ENCODE measurements at regions of chr6 and their contacts with region 1.

Region 1: GRCh38 chr6:138817822-138818308 is 22.0 kb downstream of the ECT2L start:
- DNase-seq: peak in 1 of 9 donors; percentile 28
- ATAC-seq: no peak
- H3K4me3 ChIP-seq: no peak overlapping the region
- H3K4me3 Mint-ChIP-seq: no peak overlapping the region
- H3K27ac ChIP-seq: no peak overlapping the region
- H3K27ac Mint-ChIP-seq: peak overlapping the region in 1 of 9 donors; percentile 21
- H3K4me1 ChIP-seq: no peaks in the 10 kb centered on the region
- H3K4me1 Mint-ChIP-seq: peaks cover 0 to 30% (median 0%) of the 10 kb centered on the region in 7 donors
- H3K27me3 ChIP-seq: no peaks in the 10 kb centered on the region
- H3K27me3 Mint-ChIP-seq: no peaks in the 10 kb centered on the region

Region 2: DNA sequence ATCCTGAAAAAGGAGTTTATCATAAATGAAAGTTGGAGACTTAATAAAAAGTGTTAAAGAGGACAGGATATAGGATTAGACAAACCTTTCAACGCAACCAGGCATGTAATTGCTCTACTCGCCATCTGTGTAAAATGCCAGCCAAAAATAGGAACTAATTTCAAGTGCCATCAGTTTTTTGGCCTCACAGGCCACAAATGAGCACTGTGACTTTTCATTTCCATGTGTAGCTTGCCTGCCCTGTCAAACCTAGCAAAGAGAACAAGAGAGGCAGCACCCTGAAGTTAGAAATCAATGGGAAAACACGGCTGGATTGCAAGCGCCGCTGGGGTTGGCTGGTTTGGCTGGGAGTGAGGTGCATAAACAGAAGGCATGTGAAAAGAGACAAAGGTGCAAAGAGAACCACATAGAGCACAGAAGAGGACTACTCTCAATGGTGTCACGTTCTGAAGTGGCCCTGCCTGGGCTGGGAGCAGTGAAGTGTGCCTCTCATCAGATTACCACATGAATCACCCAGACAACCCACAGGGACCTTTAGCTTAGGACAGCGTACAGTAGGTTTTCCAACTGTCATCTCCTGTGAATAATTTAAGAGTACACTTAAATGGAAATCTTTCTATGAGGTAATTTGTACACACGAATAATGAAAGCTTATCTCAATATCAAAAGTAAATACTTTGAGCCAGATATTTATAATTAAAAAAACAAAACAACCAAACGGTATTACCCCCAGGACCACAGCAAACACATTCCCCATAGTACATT is 240.5 kb before region 1 on chr6:
- CTCF ChIA-PET with region 1: no interaction called
- POLR2A ChIA-PET with region 1: no interaction called
- intact Hi-C with region 1: no loop called
- DNase-seq: no peak
- ATAC-seq: no peak
- H3K4me3 ChIP-seq: no peak overlapping the region
- H3K4me3 Mint-ChIP-seq: no peak overlapping the region
- H3K27ac ChIP-seq: no peak overlapping the region
- H3K27ac Mint-ChIP-seq: no peak overlapping the region
- H3K4me1 ChIP-seq: no peaks in the 10 kb centered on the region
- H3K4me1 Mint-ChIP-seq: peaks cover 0 to 3% (median 0%) of the 10 kb centered on the region in 7 donors
- H3K27me3 ChIP-seq: no peaks in the 10 kb centered on the region
- H3K27me3 Mint-ChIP-seq: peaks cover 0 to 19% (median 4%) of the 10 kb centered on the region in 5 donors

Region 3: DNA sequence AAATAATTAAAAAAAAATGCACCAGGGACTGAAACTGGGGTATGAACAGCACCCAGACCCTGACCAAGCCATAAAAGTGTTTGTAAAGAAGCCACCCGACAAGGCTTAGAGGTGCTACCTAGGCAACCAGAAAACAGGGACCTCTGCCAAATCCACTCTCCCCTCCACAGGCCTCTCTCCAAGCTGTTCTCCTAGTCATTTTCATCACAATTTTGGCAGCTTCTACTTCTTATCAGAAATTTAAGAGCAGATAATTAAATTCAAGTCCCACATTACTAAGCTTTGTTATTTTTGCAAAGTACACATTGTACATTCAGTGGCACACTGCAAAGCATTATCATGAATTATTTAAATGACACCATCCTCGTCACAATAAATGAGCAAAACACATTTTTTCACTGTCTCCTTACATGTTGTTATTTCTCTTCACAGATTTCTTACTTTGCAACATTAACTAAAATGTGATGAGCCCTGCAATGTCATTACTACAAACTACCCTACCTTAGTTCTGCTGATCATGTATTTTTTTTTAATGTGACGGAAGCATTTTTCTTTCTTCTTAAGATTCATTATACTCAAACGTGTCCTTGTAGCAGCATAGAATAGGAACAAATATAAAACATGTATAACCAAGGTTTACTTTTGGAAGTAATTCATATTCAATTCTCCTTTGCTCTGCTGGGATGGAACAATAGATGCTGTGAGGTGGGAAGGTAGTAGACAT is 16.1 kb after region 1 on chr6:
- CTCF ChIA-PET with region 1: no interaction called
- POLR2A ChIA-PET with region 1: no interaction called
- intact Hi-C with region 1: no loop called
- DNase-seq: no peak
- ATAC-seq: no peak
- H3K4me3 ChIP-seq: no peak overlapping the region
- H3K4me3 Mint-ChIP-seq: no peak overlapping the region
- H3K27ac ChIP-seq: no peak overlapping the region
- H3K27ac Mint-ChIP-seq: peak overlapping the region in 1 of 9 donors; percentile 42
- H3K4me1 ChIP-seq: no peaks in the 10 kb centered on the region
- H3K4me1 Mint-ChIP-seq: no peaks in the 10 kb centered on the region
- H3K27me3 ChIP-seq: no peaks in the 10 kb centered on the region
- H3K27me3 Mint-ChIP-seq: no peaks in the 10 kb centered on the region

Region 4: GRCh38 chr6:139109558-139109957 is 291.7 kb after region 1 on chr6:
- CTCF ChIA-PET with region 1: no interaction called
- POLR2A ChIA-PET with region 1: interaction called, 3 read pairs
- intact Hi-C with region 1: loop called (anchors 5 kb)
- DNase-seq: peak in 2 of 9 donors; percentile 21 to 28
- ATAC-seq: no peak
- H3K4me3 ChIP-seq: no peak overlapping the region
- H3K4me3 Mint-ChIP-seq: peak overlapping the region in 2 of 10 donors; percentile 6 to 36
- H3K27ac ChIP-seq: no peak overlapping the region
- H3K27ac Mint-ChIP-seq: peak overlapping the region in 8 of 9 donors; percentile 38 to 94 (median 86)
- H3K4me1 ChIP-seq: peaks cover 36 to 48% of the 10 kb centered on the region in 2 donors
- H3K4me1 Mint-ChIP-seq: peaks cover 17 to 74% (median 59%) of the 10 kb centered on the region in 7 donors
- H3K27me3 ChIP-seq: no peaks in the 10 kb centered on the region
- H3K27me3 Mint-ChIP-seq: no peaks in the 10 kb centered on the region

Region 5: GRCh38 chr6:139173172-139173571 is 355.3 kb after region 1 on chr6:
- CTCF ChIA-PET with region 1: interaction called, 3 read pairs
- POLR2A ChIA-PET with region 1: no interaction called
- intact Hi-C with region 1: loop called in 1 of 2 experiments (anchors 5 kb)
- DNase-seq: peak in 6 of 9 donors; percentile 31 to 54 (median 40)
- ATAC-seq: peak; percentile 69
- H3K4me3 ChIP-seq: no peak overlapping the region
- H3K4me3 Mint-ChIP-seq: peak overlapping the region; percentile 16 to 75 (median 60)
- H3K27ac ChIP-seq: peak overlapping the region; percentile 49
- H3K27ac Mint-ChIP-seq: peak overlapping the region; percentile 64 to 88 (median 83)
- H3K4me1 ChIP-seq: peaks cover 50 to 85% of the 10 kb centered on the region in 2 donors
- H3K4me1 Mint-ChIP-seq: peaks cover 70 to 95% (median 92%) of the 10 kb centered on the region in 7 donors
- H3K27me3 ChIP-seq: no peaks in the 10 kb centered on the region
- H3K27me3 Mint-ChIP-seq: no peaks in the 10 kb centered on the region

Region 6: DNA sequence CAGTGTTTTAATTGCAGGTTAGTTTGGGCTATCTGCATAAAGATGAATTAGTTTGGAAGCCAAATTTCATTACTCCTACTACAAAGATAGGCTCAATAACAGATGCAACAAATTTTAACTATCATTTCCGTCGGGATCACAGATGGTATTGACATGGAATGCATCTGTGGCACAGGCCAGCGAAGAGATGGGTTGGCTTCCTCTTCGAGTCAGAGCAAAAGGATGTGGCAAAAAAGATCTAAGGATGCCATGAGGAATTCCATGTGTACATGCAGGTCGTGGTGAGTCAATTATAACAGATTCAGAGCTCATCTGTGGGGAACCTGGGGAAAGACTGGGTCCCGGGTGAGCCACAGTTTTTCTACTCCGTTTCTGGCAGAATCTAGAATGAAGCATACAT is 639.6 kb after region 1 on chr6:
- CTCF ChIA-PET with region 1: no interaction called
- POLR2A ChIA-PET with region 1: no interaction called
- intact Hi-C with region 1: no loop called
- DNase-seq: no peak
- ATAC-seq: no peak
- H3K4me3 ChIP-seq: no peak overlapping the region
- H3K4me3 Mint-ChIP-seq: no peak overlapping the region
- H3K27ac ChIP-seq: no peak overlapping the region
- H3K27ac Mint-ChIP-seq: no peak overlapping the region
- H3K4me1 ChIP-seq: no peaks in the 10 kb centered on the region
- H3K4me1 Mint-ChIP-seq: no peaks in the 10 kb centered on the region
- H3K27me3 ChIP-seq: no peaks in the 10 kb centered on the region
- H3K27me3 Mint-ChIP-seq: peaks cover 0 to 3% (median 0%) of the 10 kb centered on the region in 5 donors

Region 7: GRCh38 chr6:139919107-139920026 is 1101.5 kb after region 1 on chr6:
- CTCF ChIA-PET with region 1: interaction called, 10 read pairs
- POLR2A ChIA-PET with region 1: no interaction called
- intact Hi-C with region 1: no loop called
- DNase-seq: no peak
- ATAC-seq: peak; percentile 34
- H3K4me3 ChIP-seq: no peak overlapping the region
- H3K4me3 Mint-ChIP-seq: no peak overlapping the region
- H3K27ac ChIP-seq: no peak overlapping the region
- H3K27ac Mint-ChIP-seq: peak overlapping the region in 1 of 9 donors; percentile 10
- H3K4me1 ChIP-seq: no peaks in the 10 kb centered on the region
- H3K4me1 Mint-ChIP-seq: peaks cover 0 to 7% (median 0%) of the 10 kb centered on the region in 7 donors
- H3K27me3 ChIP-seq: no peaks in the 10 kb centered on the region
- H3K27me3 Mint-ChIP-seq: peaks cover 3 to 52% (median 30%) of the 10 kb centered on the region in 5 donors

Region 8: DNA sequence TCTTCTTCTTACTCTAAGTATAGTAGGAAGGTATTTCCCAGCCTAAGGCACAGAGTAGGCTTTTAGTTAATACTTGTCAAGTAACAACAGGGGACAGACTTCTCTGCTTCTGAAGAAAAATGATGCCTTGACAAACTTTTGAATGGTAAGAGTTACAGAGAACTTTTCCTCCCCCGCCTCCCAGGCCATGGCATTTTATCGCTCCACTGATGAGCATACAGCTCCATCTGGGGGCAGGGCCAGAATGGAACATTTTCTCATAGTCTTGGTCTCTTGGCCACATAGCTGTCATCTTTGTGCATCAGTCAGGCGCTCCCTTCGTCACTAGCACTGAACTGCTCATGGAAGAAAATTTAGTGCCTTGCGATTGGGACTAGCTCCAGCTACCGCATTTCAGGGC is 1623.4 kb after region 1 on chr6:
- CTCF ChIA-PET with region 1: no interaction called
- POLR2A ChIA-PET with region 1: no interaction called
- intact Hi-C with region 1: loop called in 1 of 2 experiments (anchors 5 kb)
- DNase-seq: peak in 1 of 9 donors; percentile 0
- ATAC-seq: peak; percentile 46
- H3K4me3 ChIP-seq: no peak overlapping the region
- H3K4me3 Mint-ChIP-seq: no peak overlapping the region
- H3K27ac ChIP-seq: no peak overlapping the region
- H3K27ac Mint-ChIP-seq: no peak overlapping the region
- H3K4me1 ChIP-seq: no peaks in the 10 kb centered on the region
- H3K4me1 Mint-ChIP-seq: peaks cover 0 to 2% (median 0%) of the 10 kb centered on the region in 7 donors
- H3K27me3 ChIP-seq: no peaks in the 10 kb centered on the region
- H3K27me3 Mint-ChIP-seq: peaks cover 0 to 6% (median 0%) of the 10 kb centered on the region in 5 donors

Measured in naive thymus-derived CD4-positive, alpha-beta T cell (primary cell).